Head of caudate nucleus (tissue), 42 donors: ENCODE measurements at regions of chr3 and their contacts with region 1.

Region 1: GRCh38 chr3:10344147-10344943 is 23.4 kb upstream of the SEC13 start:
- DNase-seq: peak; percentile 21 to 81 (median 56)

Region 2: DNA sequence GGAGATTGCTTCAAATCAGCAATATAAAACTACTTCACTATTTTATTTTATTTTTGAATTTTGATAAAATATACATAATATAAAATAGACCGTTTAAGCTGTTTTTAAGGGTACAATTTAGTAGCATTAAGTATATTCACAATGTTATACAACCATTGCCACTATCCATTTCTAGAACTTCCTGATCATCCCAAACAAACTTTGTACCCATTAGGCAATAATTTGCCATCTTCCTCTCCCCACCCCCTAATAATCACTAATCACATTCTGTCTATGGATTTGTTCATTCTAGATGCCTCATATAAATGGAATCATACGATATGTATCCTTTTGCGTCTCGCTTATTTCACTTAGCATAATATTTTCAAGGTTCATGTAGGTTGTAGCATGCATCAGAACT is 289.2 kb before region 1 on chr3:
- intact Hi-C with region 1: no loop called
- DNase-seq: no peak

Region 3: GRCh38 chr3:10738688-10739372 is 394.5 kb after region 1 on chr3:
- intact Hi-C with region 1: loop called (anchors 5 kb)
- DNase-seq: peak; percentile 71 to 94 (median 86)